ENCODE measurements at regions of chrX and their contacts with region 1.

Region 1: DNA sequence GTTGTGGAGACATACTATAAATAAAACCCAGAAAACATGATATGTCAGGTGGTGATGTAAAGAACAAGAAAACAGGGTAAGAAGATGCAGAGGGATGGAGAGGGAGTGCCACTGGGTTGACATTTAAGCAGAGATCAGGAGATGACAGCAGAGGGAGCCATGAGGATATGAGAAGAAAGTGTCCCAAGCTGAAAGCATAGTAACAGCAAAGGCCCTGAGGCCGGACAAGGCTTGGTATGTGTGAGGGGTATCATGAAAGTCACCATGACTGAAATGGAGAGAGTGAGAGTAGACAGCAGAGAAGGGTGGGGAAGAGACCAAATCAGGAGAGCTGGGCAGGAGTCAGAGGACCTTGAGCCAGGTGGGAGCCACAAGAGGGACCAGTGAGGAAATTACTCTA is 3.4 kb downstream of the GPKOW start:
- H3K4me3 Mint-ChIP-seq: no peak overlapping the region
- H3K27ac Mint-ChIP-seq: no peak overlapping the region
- H3K4me1 Mint-ChIP-seq: peaks cover 33% of the 10 kb centered on the region
- H3K27me3 Mint-ChIP-seq: no peaks in the 10 kb centered on the region

Region 2: GRCh38 chrX:49165901-49166881 is 46.1 kb after region 1 on chrX:
- intact Hi-C with region 1: loop called (anchors 5 kb)
- H3K4me3 Mint-ChIP-seq: peak overlapping the region; percentile 83
- H3K27ac Mint-ChIP-seq: peak overlapping the region; percentile 99
- H3K4me1 Mint-ChIP-seq: peaks cover 55% of the 10 kb centered on the region
- H3K27me3 Mint-ChIP-seq: no peaks in the 10 kb centered on the region

Region 3: DNA sequence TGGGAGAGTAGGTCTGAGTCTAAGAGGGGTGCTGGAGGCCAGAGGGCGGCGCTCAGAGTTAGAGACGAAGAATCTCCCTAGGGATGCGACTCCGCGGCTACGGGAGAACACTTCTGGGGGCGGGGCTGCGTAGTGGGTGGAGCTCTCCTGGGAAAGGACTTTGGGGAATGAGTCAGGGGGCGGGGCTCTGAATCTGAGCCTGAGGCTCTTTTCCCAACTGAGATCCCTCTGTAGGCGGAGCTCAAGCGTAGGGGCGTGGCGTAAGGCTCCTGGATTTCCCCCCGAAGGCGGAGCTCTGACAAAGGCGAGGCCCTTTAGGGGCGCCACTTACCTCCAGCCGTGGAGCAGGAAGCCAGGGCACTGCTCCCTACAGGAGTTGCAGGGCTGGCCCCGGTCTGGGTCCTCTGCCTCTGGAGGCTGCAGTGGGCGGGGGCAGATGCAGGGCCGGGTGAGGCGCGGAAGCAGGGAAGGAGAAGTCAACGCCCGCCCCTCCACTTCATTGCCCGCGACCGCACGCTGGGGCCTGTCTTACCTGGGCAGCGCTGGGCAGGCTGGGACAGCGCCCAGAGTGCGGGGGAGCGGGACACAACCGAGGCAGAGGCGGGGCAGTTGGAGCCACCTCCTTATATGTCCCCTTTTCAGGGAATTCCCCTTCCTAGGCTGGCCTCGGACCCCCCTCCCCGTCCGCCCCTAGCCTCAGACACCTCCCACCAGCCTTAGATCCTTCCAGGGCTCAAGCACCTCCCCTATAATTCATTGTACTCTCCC is 64.4 kb after region 1 on chrX:
- intact Hi-C with region 1: no loop called
- H3K4me3 Mint-ChIP-seq: peak overlapping the region; percentile 84
- H3K27ac Mint-ChIP-seq: peak overlapping the region; percentile 78
- H3K4me1 Mint-ChIP-seq: peaks cover 64% of the 10 kb centered on the region
- H3K27me3 Mint-ChIP-seq: no peaks in the 10 kb centered on the region

Measured in dendritic cell treated with granulocyte-macrophage colony-stimulating factor and Interleukin-4, amounts not matched to agents 40 ng/mL and 50 ng/mL, for 4 days (primary cell).